Activated CD8-positive, alpha-beta memory T cell treated with anti-CD3 and anti-CD28 coated beads, Interleukin-2, amount 10 ng/mL, durations not matched to agents 7 days and 5 days (primary cell): ENCODE measurements at regions of chr16 and their contacts with region 1.

Region 1: GRCh38 chr16:53503270-53503923 is 388 bp upstream of the AKTIP start:
- DNase-seq: peak; percentile 100
- ATAC-seq: peak; percentile 93
- H3K4me3 Mint-ChIP-seq: peak overlapping the region; percentile 91
- H3K27ac Mint-ChIP-seq: peak overlapping the region; percentile 86
- H3K4me1 Mint-ChIP-seq: peaks cover 48% of the 10 kb centered on the region
- H3K27me3 Mint-ChIP-seq: no peaks in the 10 kb centered on the region

Region 2: DNA sequence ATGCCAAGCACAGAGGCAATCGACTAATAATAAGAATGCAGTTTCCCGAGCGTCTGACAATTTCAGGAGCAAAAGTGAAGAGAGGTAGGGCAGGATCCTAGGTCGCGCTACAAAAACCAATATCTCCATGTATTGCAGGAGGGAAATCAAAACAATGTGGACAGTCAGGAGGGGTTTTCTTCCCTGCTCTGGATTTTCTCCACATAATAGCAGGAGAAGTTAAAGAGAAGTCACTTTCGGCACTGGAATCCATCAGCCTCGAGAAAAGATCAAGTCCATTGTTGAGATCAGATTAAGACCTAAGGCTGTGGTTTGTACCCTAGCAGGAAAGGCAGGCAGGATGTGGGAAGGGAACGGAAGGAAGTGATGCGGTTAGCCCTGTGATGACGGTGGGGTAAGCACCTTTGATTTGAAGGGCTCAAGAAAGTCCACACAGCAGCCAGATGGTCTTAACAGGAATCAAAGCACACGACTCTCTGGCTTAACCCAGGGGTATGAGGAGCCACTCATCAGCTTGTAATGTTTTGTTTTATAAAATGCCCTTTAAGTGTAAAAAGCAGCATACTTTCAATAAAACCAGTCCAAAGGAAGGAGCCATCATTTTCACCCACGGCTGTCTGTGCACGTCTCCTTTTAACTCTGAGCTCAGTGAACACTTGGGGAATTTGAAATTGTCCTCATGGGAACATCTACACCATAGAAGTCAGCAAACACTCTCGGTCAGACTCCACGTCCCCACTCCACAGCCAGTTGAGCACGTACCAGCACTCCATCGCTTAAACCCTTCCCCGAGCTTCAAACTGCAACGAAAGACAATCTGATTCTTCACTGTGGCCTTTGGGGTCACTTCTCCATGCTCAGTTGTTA is 15.4 kb after region 1 on chr16:
- CTCF ChIA-PET with region 1: interaction called, 14 read pairs
- DNase-seq: peak; percentile 95
- ATAC-seq: peak; percentile 89
- H3K4me3 Mint-ChIP-seq: peak overlapping the region; percentile 70
- H3K27ac Mint-ChIP-seq: peak overlapping the region; percentile 89
- H3K4me1 Mint-ChIP-seq: peaks cover 49% of the 10 kb centered on the region
- H3K27me3 Mint-ChIP-seq: no peaks in the 10 kb centered on the region